OCI-LY7 (cell line): ENCODE measurements at regions of chr5 and their contacts with region 1.

Region 1: DNA sequence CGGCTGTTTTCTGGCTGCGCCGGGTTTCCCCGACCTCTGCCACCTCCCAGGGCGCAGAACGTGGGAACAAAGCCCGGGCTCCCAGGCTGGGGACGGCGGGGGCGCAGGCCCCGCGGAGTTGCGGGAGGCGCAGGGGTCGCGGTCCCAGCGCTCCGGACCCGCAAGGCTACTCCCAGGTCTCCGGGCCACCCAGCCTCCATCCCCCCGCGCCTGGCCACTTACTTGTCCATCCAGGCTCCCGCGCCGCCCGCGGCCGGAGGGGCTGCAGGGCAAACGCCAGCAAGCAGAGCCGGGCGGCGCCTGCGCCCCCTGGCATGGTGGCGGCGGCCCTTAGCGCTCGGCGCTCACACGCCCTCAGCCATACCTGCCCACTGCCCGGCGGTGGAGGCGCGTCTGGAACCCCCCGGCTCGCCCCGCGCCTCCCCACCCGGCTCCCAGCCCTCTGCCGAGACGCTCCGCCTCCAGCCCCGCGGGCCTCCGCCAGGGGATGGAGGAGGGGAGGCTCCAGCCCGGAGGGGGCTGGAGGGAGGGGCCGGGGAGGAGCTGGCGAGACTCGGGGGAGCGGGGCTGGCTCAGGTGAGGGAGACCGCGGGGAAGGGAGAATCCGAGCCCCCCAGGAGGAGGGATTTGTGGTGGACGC is at the start of gene ADAM19:
- DNase-seq: peak; percentile 75
- H3K4me3 ChIP-seq: peak within 1 kb of the TSS; percentile 81
- H3K27ac ChIP-seq: peak within 1 kb of the TSS; percentile 28
- H3K4me1 ChIP-seq: peaks cover 54% of the 10 kb centered on the region
- CTCF ChIP-seq: 0 out of 2 replicates have a peak, but pooled peaks have one; percentile 6
- total RNA-seq, gene ADAM19: 19.0 and 24.2 TPM in 2 replicates

Region 2: DNA sequence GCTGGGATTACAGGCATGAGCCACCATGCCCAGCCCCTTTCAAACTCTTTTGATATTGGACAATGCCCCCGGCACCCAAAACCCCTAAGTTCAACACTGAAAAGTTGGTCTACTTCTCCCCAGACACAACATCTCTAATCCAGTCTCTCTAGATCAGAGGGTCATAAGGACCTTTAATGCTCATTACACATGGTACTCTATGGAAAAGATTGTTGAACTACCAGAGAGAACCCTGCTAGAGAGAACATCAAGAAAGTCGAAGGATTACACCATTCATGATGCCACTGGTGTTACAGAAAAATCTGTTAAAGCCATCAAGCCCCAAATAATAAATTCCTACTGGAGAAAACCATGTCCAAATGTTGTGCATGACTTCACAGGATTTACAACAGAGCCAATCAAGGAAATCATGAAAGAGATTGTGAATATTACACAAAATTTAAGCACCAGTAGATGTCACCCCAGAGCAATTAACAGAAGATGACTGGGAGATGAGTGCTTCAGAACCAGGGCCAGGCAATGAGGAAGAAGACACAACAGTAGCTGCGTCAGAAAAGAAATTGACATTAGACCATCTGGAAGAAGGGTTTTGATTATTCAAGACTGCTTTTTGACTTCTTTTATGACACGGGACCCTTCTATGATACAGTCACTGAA is 143.8 kb before region 1 on chr5:
- CTCF ChIA-PET with region 1: no interaction called
- POLR2A ChIA-PET with region 1: no interaction called
- intact Hi-C with region 1: loop called (anchors 2 kb)
- DNase-seq: peak; percentile 82
- H3K4me3 ChIP-seq: no peak overlapping the region
- H3K27ac ChIP-seq: no peak overlapping the region
- H3K4me1 ChIP-seq: peaks cover 9% of the 10 kb centered on the region
- CTCF ChIP-seq: peak; percentile 87

Region 3: DNA sequence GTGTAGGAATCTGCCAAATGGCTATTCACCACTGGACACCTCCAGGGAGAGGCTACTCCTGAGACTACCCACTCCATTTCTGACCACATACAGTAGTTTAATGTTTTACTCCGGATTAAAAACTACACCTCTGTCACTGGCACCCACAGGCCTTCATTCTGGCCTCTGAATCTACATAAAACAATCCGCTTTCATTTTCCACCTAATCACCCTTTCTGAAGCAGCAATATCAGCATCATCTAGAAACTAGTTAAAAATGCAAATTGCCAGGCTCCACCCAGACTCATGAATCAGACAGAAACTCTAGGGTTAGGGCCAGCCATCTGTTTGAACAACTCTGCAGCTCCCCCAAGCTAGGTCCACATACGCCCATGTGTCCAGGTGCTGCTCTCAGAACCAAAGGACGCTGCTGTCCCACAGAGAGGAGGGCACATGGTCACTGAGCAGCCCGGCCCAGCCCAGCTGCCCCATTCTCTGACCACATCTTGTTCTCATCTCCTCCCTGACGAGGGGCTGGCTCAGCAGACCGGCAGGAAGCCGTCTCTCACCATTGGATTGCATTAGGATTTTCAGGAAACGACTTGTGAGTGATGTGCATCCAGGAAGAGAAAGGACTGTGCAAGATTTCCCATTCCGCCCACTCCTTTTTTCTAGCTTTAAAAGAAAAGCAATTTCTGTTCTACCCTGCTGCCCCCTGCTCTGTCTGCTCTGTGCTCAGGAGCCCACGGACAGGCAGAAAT is 34.6 kb before region 1 on chr5:
- CTCF ChIA-PET with region 1: no interaction called
- POLR2A ChIA-PET with region 1: interaction called, 4 read pairs
- intact Hi-C with region 1: loop called (anchors 2 kb)
- DNase-seq: peak; percentile 39
- H3K4me3 ChIP-seq: peak overlapping the region; percentile 38
- H3K27ac ChIP-seq: no peak overlapping the region
- H3K4me1 ChIP-seq: peaks cover 37% of the 10 kb centered on the region
- CTCF ChIP-seq: no peak

Region 4: GRCh38 chr5:157596487-157596886 is 21.0 kb after region 1 on chr5:
- CTCF ChIA-PET with region 1: interaction called, 6 read pairs
- POLR2A ChIA-PET with region 1: interaction called, 111 read pairs
- intact Hi-C with region 1: loop called (anchors 1 kb)
- DNase-seq: peak; percentile 94
- H3K4me3 ChIP-seq: peak overlapping the region; percentile 18
- H3K27ac ChIP-seq: peak overlapping the region; percentile 83
- H3K4me1 ChIP-seq: peaks cover 96% of the 10 kb centered on the region
- CTCF ChIP-seq: no peak